ENCODE measurements at regions of chr17 and their contacts with region 1.

Region 1: DNA sequence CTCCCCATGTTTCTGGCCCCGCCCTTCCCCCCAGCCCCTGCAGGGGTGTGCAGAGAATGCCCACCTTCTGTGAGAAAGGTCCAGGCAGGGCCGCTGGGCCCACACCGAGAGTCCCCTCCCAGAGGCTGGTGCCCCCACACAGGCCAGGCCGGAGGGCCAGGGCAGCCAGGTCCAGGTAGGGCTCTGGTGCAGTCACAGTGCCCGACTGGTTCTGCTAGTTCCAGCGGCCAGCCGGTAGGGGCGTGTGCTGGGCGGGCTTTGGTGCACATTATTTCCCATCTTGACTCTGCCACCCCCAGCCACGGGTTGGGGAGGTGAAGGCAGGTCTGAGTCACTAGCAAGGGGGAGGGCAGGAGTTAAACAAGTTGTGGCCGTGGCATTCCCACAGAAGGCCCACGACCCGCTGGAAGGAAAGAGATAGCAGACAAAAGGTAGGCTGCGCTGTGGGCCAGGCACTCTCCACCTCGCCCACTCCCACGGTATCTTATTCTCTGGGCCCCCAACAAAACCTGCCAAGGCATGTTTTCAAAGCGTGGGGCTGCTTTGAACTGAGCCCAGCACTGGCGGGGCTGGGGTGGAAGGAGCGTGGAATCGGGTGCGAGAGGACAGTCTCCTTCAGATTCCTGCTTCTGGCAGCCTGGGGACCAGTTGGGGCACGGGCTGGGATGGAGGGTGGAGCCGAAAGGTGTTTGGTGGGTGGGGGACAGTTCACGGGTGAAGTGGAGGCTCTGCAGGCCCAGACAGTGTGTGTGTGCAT is 1.9 kb downstream of the EPN3 start:
- DNase-seq: no peak
- ATAC-seq: peak; percentile 37 to 71 (median 64)
- H3K4me3 ChIP-seq: peak overlapping the region in 9 of 10 donors; percentile 10 to 54 (median 48)
- H3K27ac ChIP-seq: peak overlapping the region; percentile 29 to 89 (median 80)
- H3K4me1 ChIP-seq: peaks cover 3 to 33% (median 19%) of the 10 kb centered on the region in 9 donors
- H3K27me3 ChIP-seq: peaks cover 0 to 45% (median 24%) of the 10 kb centered on the region in 7 donors
- CTCF ChIP-seq: peak in 7 of 9 donors; percentile 11 to 43 (median 37)

Region 2: DNA sequence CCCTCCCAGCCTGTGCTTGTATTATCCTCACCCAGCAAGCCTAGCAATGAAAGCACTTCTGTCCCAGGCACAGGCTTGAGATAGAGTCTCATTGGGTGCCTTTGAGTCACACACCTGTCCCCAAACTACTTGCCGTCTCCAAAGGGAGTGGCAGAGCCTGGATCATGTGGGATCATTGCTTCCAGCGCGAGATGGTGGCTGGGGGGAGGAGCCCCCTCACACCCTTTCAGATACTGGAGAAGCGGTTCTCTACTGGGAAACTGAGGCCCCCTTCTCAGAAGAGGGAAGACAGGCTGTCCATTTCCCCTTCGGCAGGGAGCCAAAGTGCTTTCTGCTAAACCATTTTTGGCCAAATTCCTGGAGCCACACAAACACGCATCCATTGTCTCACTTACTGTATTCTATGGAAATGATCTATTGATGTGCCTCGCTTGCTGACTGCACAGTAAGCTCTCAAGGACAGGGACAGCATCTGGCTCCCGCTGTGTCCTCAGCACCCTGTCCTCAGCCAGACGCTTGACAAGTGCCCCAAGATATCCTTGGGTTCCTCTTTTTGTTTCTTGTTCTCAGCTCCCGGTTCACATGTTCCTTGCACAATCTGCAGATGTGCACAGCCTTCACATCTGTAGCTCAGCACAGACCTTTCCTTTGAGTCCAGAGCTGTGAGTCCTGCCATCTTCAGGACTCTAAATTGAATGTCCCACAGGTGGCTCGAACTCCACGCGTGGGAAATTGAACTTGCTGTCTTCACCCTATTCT is 513.4 kb before region 1 on chr17:
- intact Hi-C with region 1: loop called in 1 of 10 experiments (anchors 5 kb)
- DNase-seq: no peak
- ATAC-seq: peak in 1 of 8 donors; percentile 13
- H3K4me3 ChIP-seq: no peak overlapping the region
- H3K27ac ChIP-seq: no peak overlapping the region
- H3K4me1 ChIP-seq: peaks cover 0 to 17% (median 0%) of the 10 kb centered on the region in 9 donors
- H3K27me3 ChIP-seq: peaks cover 0 to 5% (median 0%) of the 10 kb centered on the region in 7 donors
- CTCF ChIP-seq: no peak

Region 3: DNA sequence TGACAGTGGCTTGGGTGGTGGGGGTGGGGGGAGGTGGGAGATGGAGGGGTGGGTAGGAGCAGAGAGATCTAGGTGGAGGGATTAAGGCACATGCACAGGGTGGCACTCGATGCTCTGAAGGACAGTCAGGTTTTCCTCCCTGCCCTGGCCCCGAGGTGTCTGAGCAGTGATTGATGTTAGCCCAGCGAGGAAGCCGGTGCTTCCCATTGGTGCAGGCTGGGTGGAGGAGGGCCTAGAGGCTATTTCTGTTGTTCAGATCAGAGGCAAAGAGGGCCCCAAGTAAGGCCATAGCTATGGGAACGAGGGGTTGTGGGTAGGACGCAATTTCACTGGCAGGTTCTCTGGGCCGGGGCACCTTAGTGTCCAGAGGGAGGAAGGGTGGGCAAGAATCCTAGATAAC is 49.2 kb after region 1 on chr17:
- intact Hi-C with region 1: no loop called
- DNase-seq: peak; percentile 50 to 51
- ATAC-seq: peak; percentile 53 to 84 (median 75)
- H3K4me3 ChIP-seq: peak overlapping the region in 3 of 10 donors; percentile 6 to 15 (median 12)
- H3K27ac ChIP-seq: peak overlapping the region in 8 of 10 donors; percentile 12 to 78 (median 66)
- H3K4me1 ChIP-seq: peaks cover 3 to 24% (median 16%) of the 10 kb centered on the region in 9 donors
- H3K27me3 ChIP-seq: peaks cover 0 to 3% (median 0%) of the 10 kb centered on the region in 7 donors
- CTCF ChIP-seq: no peak

Region 4: GRCh38 chr17:50672831-50673601 is 138.6 kb after region 1 on chr17:
- intact Hi-C with region 1: no loop called
- DNase-seq: peak in 1 of 2 donors; percentile 49
- ATAC-seq: peak; percentile 57 to 96 (median 86)
- H3K4me3 ChIP-seq: no peak overlapping the region
- H3K27ac ChIP-seq: peak overlapping the region in 2 of 10 donors; percentile 25 to 26
- H3K4me1 ChIP-seq: peaks cover 0 to 5% (median 0%) of the 10 kb centered on the region in 9 donors
- H3K27me3 ChIP-seq: no peaks in the 10 kb centered on the region
- CTCF ChIP-seq: no peak

Measured in heart right ventricle (tissue), 16 donors.